Activated T-helper 1 cell treated with anti-CD3 and anti-CD28 coated beads, Interleukin-12 subunit alpha, Interleukin-12 subunit beta, Interleukin-2, Interleukin-4 antibody, amounts not matched to agents 30 ng/mL and 10 ng/mL and 1 ng/mL, durations not matched to agents 14 hours and 24 hours and 36 hours (primary cell): ENCODE measurements at regions of chr3 and their contacts with region 1.

Region 1: GRCh38 chr3:39267631-39268548 is 11.9 kb downstream of the CX3CR1 start:
- DNase-seq: peak; percentile 83
- H3K4me3 Mint-ChIP-seq: peak overlapping the region; percentile 69
- H3K27ac Mint-ChIP-seq: peak overlapping the region; percentile 95
- H3K4me1 Mint-ChIP-seq: peaks cover 85% of the 10 kb centered on the region
- H3K27me3 Mint-ChIP-seq: no peaks in the 10 kb centered on the region

Region 2: DNA sequence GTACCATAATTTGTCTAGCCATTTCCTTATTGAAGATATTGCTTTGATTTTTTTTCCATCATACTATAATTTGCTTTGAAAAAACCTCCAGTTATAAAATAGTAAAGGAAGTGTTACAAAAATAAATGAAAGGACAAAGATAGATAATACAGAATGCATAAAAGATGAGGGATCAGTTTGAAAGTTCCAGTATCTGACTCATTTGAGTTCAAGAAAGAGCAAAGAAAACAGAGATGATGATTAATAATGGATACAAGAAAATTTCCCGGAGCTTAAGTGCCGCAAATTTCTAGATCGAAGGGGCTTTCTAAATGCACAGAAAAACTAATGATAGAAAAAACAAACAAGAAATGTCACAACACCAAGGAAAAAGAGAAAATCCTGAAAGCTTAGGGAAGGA is 211.7 kb before region 1 on chr3:
- intact Hi-C with region 1: no loop called
- DNase-seq: no peak
- H3K4me3 Mint-ChIP-seq: no peak overlapping the region
- H3K27ac Mint-ChIP-seq: no peak overlapping the region
- H3K4me1 Mint-ChIP-seq: peaks cover 30% of the 10 kb centered on the region
- H3K27me3 Mint-ChIP-seq: no peaks in the 10 kb centered on the region

Region 3: GRCh38 chr3:39141171-39141995 is 126.5 kb before region 1 on chr3:
- intact Hi-C with region 1: no loop called
- DNase-seq: no peak
- H3K4me3 Mint-ChIP-seq: no peak overlapping the region
- H3K27ac Mint-ChIP-seq: no peak overlapping the region
- H3K4me1 Mint-ChIP-seq: peaks cover 40% of the 10 kb centered on the region
- H3K27me3 Mint-ChIP-seq: no peaks in the 10 kb centered on the region

Region 4: GRCh38 chr3:39255503-39256325 is 12.2 kb before region 1 on chr3:
- intact Hi-C with region 1: loop called (anchors 1 kb)
- DNase-seq: no peak
- H3K4me3 Mint-ChIP-seq: peak overlapping the region; percentile 45
- H3K27ac Mint-ChIP-seq: peak overlapping the region; percentile 80
- H3K4me1 Mint-ChIP-seq: peaks cover 76% of the 10 kb centered on the region
- H3K27me3 Mint-ChIP-seq: peaks cover 5% of the 10 kb centered on the region